ENCODE measurements at regions of chr1 and their contacts with region 1.

Region 1: GRCh38 chr1:205711104-205712020 is 31.1 kb upstream of the SLC45A3 start:
- DNase-seq: peak in 1 of 2 donors; percentile 89
- ATAC-seq: peak; percentile 81 to 97 (median 95)
- H3K4me3 ChIP-seq: no peak overlapping the region
- H3K4me3 Mint-ChIP-seq: no peak overlapping the region
- H3K27ac ChIP-seq: no peak overlapping the region
- H3K27ac Mint-ChIP-seq: peak overlapping the region; percentile 21 to 80
- H3K4me1 ChIP-seq: no peaks in the 10 kb centered on the region
- H3K4me1 Mint-ChIP-seq: peaks cover 6 to 21% of the 10 kb centered on the region in 2 donors
- H3K27me3 ChIP-seq: no peaks in the 10 kb centered on the region
- H3K27me3 Mint-ChIP-seq: no peaks in the 10 kb centered on the region
- CTCF ChIP-seq: peak; percentile 93

Region 2: GRCh38 chr1:205563867-205564441 is 147.4 kb before region 1 on chr1:
- intact Hi-C with region 1: no loop called
- DNase-seq: no peak
- ATAC-seq: peak in 2 of 3 donors; percentile 34 to 67
- H3K4me3 ChIP-seq: no peak overlapping the region
- H3K4me3 Mint-ChIP-seq: no peak overlapping the region
- H3K27ac ChIP-seq: no peak overlapping the region
- H3K27ac Mint-ChIP-seq: no peak overlapping the region
- H3K4me1 ChIP-seq: peaks cover 4% of the 10 kb centered on the region
- H3K4me1 Mint-ChIP-seq: peaks cover 0 to 5% of the 10 kb centered on the region in 2 donors
- H3K27me3 ChIP-seq: peaks cover 18% of the 10 kb centered on the region
- H3K27me3 Mint-ChIP-seq: peaks cover 29 to 40% of the 10 kb centered on the region in 2 donors
- CTCF ChIP-seq: no peak

Region 3: DNA sequence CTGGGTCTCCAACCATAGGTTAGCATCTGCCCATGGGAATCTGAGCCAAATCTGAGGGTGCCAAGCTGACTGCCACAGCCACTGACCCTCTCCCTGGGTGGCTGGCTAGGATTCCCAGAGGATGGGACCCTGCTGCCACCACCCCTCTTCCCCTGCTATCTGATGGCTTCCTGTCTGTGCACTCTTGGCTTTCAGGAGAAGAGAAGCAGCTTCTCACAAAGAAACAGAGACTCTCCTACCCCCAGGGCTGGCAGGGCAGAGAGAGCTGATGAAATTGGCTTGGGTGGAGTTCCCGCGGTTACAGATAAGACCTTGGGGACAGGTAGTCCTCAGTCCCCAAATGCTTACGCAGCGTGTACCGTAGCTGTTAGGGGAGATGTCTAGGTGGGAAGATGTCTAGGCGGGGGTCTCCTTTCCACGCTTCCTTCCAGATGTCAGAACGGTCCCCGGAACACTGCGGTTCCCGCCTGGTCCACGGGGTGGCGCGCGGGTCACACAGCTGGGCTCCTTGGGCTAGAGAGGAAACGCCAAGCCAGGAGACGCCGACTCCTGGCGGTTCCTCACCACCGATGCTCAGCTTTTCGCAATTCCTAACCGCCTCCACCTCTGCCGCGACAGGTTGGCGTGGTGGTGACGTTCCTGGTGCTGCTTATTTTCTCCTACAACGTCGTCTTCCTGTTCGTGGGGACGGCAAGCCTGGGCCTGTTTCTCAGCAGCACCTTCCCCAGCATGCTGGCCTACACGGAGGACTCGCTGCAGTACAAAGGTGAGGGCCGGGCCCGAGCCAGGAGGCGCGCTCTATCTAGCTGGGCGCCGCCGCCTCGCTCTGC is 119.6 kb before region 1 on chr1:
- intact Hi-C with region 1: loop called (anchors 1 kb)
- DNase-seq: peak; percentile 88 to 93
- ATAC-seq: peak; percentile 92 to 96 (median 94)
- H3K4me3 ChIP-seq: peak overlapping the region; percentile 36
- H3K4me3 Mint-ChIP-seq: peak overlapping the region; percentile 79
- H3K27ac ChIP-seq: peak overlapping the region; percentile 43
- H3K27ac Mint-ChIP-seq: peak overlapping the region; percentile 68 to 85
- H3K4me1 ChIP-seq: peaks cover 27% of the 10 kb centered on the region
- H3K4me1 Mint-ChIP-seq: peaks cover 13% of the 10 kb centered on the region in 2 donors
- H3K27me3 ChIP-seq: no peaks in the 10 kb centered on the region
- H3K27me3 Mint-ChIP-seq: peaks cover 0 to 3% of the 10 kb centered on the region in 2 donors
- CTCF ChIP-seq: peak; percentile 95

Region 4: DNA sequence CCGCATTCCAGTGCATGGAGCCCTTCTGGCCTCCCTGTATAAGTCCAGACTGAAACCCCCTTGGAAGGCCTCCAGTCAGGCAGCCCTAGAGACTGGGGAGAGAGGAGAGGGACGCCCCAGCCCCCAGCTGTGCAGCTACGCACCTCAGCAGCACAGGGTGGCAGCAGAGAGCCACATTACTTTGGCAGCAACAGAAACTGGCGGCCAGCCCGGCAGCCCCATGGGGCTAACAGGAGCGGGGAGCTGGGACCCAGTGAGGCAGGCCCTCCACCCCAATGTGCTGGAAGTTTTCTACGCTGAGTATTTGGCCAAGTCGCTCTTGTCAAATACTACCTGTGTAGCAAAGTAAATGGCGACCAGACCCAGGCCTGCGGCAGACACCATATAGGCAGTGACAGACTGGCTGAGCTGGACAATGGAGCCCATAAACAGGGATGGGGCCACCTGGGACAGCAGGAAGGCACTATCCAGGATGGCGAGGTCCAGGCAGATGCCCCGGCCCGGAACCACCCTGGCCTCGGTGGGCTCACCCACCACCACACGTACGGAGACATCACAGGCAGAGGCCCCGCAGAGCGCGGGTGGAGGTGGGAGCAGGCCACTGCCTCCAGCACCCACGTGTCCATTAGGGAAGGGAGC is 52.3 kb before region 1 on chr1:
- intact Hi-C with region 1: loop called (anchors 1 kb)
- DNase-seq: peak; percentile 62 to 84
- ATAC-seq: peak; percentile 86 to 97 (median 92)
- H3K4me3 ChIP-seq: no peak overlapping the region
- H3K4me3 Mint-ChIP-seq: no peak overlapping the region
- H3K27ac ChIP-seq: no peak overlapping the region
- H3K27ac Mint-ChIP-seq: no peak overlapping the region
- H3K4me1 ChIP-seq: no peaks in the 10 kb centered on the region
- H3K4me1 Mint-ChIP-seq: peaks cover 0 to 4% of the 10 kb centered on the region in 2 donors
- H3K27me3 ChIP-seq: no peaks in the 10 kb centered on the region
- H3K27me3 Mint-ChIP-seq: peaks cover 0 to 2% of the 10 kb centered on the region in 2 donors
- CTCF ChIP-seq: peak; percentile 70

Region 5: DNA sequence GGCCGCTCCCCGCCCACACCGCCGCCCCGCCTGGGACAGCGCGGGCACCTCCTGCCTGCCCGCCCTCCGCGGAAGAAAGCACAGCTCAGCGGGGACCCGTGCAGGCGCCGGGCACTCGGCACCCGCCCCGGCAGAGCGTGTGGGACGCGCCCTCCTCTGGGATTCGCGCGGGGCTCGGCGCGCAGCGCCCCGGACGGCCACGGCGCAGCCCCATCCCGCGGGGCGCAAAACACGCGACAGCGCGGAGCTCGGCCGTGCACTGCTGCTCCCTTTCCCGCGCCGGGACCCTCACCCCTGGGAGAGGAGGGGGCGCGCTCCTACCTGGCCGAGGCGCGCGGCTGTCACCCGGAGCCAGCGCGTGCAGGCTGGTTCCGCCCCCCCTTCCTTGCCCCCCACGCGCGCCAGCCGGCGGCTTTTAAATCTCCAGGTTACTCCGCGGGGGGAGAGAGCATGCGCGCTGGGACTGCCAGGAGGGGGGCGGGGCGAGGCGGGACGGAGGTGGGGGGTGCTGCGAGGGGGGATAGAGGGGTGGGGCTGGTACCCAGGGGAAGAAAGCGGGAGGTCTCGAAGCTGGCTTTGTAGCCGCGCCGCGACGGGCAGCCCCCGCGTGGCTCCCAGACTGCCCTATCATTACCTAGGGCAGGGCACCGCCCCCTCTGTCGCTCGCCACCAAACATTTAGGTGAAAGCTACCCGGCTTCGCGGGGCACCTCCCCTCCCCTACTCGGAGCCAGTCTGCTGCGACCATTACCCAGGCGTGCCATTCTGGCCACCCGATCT is 31.1 kb before region 1 on chr1 and contains the start of gene SLC45A3:
- intact Hi-C with region 1: loop called (anchors 1 kb)
- DNase-seq: peak in 1 of 2 donors; percentile 56
- ATAC-seq: peak; percentile 61 to 72 (median 67)
- H3K4me3 ChIP-seq: peak within 1 kb of the TSS; percentile 17
- H3K4me3 Mint-ChIP-seq: peak within 1 kb of the TSS; percentile 90
- H3K27ac ChIP-seq: no peak within 1 kb of the TSS
- H3K27ac Mint-ChIP-seq: peak within 1 kb of the TSS; percentile 22 to 41
- H3K4me1 ChIP-seq: peaks cover 14% of the 10 kb centered on the region
- H3K4me1 Mint-ChIP-seq: peaks cover 14 to 19% of the 10 kb centered on the region in 2 donors
- H3K27me3 ChIP-seq: peaks cover 2% of the 10 kb centered on the region
- H3K27me3 Mint-ChIP-seq: peaks cover 11 to 15% of the 10 kb centered on the region in 2 donors
- CTCF ChIP-seq: no peak
- total RNA-seq, gene SLC45A3: 0.31 to 28.8 (median 1.8) TPM

Region 6: DNA sequence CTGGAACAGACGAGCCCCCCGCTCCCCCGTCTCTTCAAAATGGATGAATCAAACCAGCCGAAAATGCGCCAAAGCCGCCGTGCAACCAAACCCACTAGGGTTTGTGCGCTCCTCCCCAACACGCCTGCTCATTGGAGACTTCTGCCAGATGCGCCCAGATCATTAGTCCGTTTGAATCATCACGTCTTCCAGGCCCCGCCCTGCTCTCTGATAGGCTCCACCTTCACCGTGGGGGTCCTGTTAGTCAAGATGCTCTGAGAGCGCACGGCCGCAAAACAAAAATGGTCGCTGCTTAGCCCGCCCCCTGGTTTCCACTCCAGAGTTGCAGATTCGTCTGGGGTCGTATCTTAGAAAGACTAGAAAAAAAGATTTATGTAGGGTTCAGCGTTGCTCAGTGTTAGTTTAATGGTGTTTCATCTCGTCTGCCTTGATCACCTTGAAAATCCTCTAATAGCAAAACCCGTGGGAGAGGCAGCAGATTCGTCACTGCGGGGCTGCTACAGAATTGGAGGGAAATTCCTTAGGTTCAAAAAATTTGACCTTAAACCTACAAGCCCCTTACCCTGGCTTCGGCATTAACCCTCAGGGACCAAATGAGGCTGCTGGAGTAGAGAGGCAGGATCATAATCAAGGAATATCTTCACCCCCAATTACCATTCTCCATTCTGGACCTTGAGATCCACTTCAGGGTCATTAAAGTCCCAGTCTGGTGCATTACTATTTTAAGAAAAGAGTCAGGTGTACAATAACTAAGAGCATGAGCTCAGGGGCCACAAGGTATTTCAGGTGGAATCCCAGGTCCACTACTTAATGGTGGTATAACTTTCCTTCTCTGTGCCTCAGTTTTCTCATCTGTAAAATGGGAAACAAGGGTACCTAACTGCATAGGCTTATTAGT is 39.0 kb after region 1 on chr1 and contains the start of gene NUCKS1:
- intact Hi-C with region 1: no loop called
- DNase-seq: peak; percentile 93 to 99
- ATAC-seq: peak; percentile 74 to 87 (median 77)
- H3K4me3 ChIP-seq: peak within 1 kb of the TSS; percentile 70
- H3K4me3 Mint-ChIP-seq: peak within 1 kb of the TSS; percentile 100
- H3K27ac ChIP-seq: peak within 1 kb of the TSS; percentile 86
- H3K27ac Mint-ChIP-seq: peak within 1 kb of the TSS; percentile 90 to 97
- H3K4me1 ChIP-seq: peaks cover 7% of the 10 kb centered on the region
- H3K4me1 Mint-ChIP-seq: peaks cover 26 to 35% of the 10 kb centered on the region in 2 donors
- H3K27me3 ChIP-seq: no peaks in the 10 kb centered on the region
- H3K27me3 Mint-ChIP-seq: no peaks in the 10 kb centered on the region
- CTCF ChIP-seq: no peak
- total RNA-seq, gene NUCKS1: 89.2 to 113 (median 103) TPM